ENCODE measurements at regions of chr6 and their contacts with region 1.

Region 1: GRCh38 chr6:6659600-6660327 is 71.2 kb downstream of the LY86 start:
- DNase-seq: peak in 1 of 3 donors; percentile 45
- ATAC-seq: peak in 1 of 2 donors; percentile 34
- H3K4me3 ChIP-seq: no peak overlapping the region
- H3K27ac ChIP-seq: no peak overlapping the region
- H3K4me1 ChIP-seq: peaks cover 12% of the 10 kb centered on the region
- H3K27me3 ChIP-seq: no peaks in the 10 kb centered on the region

Region 2: GRCh38 chr6:6591778-6592465 is 67.8 kb before region 1 on chr6:
- intact Hi-C with region 1: loop called in 1 of 4 experiments (anchors 10 kb)
- DNase-seq: peak in 1 of 3 donors; percentile 22
- ATAC-seq: peak; percentile 17 to 72
- H3K4me3 ChIP-seq: no peak overlapping the region
- H3K27ac ChIP-seq: peak overlapping the region; percentile 25
- H3K4me1 ChIP-seq: peaks cover 15% of the 10 kb centered on the region
- H3K27me3 ChIP-seq: no peaks in the 10 kb centered on the region

Region 3: DNA sequence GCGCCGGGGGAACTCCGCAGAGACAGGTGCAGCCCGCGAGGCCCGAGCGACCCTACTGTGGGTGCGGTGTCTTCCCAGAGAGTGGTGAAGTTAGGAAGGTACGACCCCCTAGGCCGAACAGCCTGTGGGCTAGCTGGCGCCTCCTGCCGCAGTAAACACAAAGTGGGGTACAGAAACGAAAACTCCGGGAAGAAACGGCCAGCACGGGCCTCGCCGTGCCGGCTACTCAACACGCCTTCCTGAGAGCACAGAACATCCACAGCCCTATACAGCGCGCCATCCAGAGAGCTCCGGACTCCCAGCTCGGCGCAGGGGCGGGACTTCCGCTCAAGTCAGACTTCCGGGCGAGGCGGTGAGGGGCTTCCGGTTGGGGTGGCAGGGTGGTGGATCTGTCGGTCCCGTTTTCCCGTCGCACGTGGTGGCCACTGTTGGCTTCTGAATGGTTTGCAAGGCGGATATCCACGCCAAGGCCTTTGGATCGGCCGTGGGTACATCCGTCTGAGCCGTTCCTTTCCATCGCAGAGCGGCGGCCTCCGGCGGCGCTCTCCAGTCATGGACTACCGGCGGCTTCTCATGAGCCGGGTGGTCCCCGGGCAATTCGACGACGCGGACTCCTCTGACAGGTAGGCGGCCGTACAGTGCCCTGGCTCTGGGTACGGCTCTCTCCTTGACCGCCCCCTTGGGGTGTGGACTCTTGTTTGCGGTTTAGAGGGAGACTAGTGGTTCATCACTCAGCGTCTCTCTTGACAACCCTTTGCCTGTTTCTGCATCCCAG is 729.9 kb after region 1 on chr6 and contains the starts of genes CAGE1 and RIOK1:
- intact Hi-C with region 1: no loop called
- DNase-seq: peak; percentile 97 to 98 (median 97)
- ATAC-seq: peak; percentile 100
- H3K4me3 ChIP-seq: peak within 1 kb of the TSS; percentile 53
- H3K27ac ChIP-seq: peak within 1 kb of the TSS; percentile 48
- H3K4me1 ChIP-seq: no peaks in the 10 kb centered on the region
- H3K27me3 ChIP-seq: no peaks in the 10 kb centered on the region
- total RNA-seq, gene CAGE1: 0.11 to 0.17 (median 0.11) TPM in 3 of 4 donors, not detected in the other
- total RNA-seq, gene RIOK1: 10.6 to 14.3 (median 13.3) TPM

Measured in right cardiac atrium (tissue), 5 donors.